ENCODE measurements at regions of chr9 and their contacts with region 1.

Region 1: DNA sequence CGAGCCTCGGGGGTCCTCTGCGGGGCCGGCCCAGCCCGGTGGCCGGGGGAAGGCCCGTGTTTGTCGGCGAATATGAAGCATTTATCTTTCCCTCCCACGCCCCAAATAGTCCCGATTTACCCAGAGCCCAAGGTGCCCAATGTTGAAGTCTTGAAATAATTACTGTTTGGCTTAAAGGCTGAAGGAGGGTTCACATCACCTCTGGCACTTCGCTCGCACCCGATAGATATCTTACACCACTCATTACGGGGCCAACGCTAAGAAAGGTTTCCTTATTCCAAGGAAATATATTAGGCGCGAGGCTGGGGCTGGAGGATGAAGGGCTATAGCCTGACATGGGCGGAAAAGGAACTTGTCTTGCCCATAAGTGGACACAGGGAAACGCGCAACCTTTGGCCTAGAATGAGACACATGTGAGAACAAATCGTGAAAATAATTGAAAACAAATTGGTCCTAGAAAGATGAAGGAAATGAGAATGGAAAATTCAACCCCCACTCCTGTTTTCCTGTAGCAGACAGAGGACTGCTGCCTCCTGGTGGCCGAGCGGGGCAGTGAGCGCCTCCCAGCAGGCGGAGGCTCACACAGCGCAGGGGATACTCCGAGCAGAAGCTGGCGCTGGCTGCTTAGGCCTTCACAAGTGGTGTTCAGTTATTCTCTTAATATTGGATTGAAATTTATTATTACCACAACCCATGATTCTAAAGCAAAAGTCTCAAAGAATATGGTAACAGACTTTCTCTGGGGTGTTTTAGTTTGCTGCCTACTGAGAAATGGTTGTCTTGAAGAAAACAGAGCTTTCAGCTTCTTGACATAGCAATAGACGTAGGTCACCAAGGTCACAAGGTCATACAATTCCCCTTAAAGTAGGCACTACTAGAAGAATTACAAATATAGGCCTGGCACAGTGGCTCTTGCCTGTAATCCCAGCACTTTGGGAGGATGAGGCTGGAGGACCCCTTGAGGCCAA is 7.9 kb downstream of the CCL21 start:
- DNase-seq: peak; percentile 78 to 98 (median 88)

Region 2: GRCh38 chr9:34620061-34620994 is 81.7 kb before region 1 on chr9 and contains the start of gene DCTN3:
- intact Hi-C with region 1: no loop called
- DNase-seq: peak; percentile 90 to 99 (median 96)

Region 3: DNA sequence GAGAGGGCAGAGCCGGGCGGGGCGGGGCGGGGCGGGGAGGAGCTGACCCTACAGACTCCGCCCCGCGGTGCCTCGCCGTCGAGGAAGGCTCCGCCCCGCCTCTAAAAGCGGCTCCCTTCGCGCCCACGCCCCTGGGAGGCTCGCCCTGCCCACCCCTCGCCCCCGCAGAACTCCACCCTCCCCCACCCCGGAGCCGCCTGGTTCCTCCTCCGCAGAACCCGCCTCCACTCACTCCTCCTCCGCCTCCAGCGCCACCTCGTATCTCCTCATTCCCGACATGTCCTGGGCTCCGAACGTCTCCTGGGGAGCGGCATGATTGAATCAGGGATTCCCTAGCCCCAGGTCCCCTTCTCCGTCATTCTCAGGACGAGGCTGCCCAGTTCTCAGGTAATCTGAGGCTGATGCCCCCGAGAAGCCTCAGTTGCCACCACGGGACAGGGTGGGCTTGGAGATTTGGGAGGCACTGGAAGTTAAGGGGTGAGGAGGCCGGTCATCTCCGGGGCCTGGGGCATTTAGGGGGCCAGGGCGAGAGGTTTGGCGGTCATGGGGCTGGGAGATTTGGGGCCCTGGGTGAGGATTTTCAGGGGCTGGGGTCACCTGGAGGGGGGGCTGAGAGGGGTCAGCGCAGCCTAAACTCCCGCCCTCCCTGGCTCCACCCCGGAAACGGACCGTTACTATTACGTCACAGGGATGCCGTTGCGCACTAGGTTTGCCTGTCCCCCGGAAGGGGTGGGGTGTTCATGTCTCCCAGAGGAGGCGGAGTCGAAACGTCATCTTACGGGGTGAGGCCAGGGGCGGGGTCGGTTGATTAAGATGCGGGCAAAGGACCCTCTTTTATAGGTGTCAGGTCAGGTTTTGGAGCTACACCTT is 36.4 kb before region 1 on chr9:
- intact Hi-C with region 1: loop called (anchors 2 kb)
- DNase-seq: peak; percentile 90 to 99 (median 96)

Region 4: DNA sequence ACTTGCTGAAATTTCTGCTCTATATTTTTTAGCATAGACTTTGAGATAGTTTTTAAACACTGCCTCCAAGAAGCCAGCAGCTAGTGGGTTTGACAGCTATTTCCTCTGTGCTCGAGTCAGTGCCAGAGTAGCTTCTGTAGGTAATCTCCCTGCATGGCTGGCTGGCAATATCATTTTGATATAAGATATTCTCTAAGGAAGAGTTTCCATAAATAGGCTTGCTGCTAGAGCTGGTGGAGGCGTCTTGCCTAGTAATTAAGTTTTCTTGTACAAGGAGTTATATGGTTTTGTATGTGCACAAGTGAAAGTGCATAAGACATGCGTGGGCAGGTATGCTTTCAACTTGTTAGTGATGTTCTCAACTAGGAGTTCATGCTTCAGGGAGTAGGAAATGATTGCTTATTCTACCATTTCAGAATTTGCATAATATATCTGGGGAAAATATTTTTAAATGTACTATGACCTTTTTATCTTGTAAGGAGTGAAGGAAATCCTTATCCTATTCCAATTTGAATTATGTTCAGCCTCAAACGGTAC is 82.0 kb after region 1 on chr9:
- intact Hi-C with region 1: no loop called
- DNase-seq: peak in 2 of 10 donors; percentile 9 to 37

Measured in posterior cingulate gyrus (tissue), 11 donors.